Endothelial cell of umbilical vein (primary cell): ENCODE measurements at regions of chr7 and their contacts with region 1.

Region 1: DNA sequence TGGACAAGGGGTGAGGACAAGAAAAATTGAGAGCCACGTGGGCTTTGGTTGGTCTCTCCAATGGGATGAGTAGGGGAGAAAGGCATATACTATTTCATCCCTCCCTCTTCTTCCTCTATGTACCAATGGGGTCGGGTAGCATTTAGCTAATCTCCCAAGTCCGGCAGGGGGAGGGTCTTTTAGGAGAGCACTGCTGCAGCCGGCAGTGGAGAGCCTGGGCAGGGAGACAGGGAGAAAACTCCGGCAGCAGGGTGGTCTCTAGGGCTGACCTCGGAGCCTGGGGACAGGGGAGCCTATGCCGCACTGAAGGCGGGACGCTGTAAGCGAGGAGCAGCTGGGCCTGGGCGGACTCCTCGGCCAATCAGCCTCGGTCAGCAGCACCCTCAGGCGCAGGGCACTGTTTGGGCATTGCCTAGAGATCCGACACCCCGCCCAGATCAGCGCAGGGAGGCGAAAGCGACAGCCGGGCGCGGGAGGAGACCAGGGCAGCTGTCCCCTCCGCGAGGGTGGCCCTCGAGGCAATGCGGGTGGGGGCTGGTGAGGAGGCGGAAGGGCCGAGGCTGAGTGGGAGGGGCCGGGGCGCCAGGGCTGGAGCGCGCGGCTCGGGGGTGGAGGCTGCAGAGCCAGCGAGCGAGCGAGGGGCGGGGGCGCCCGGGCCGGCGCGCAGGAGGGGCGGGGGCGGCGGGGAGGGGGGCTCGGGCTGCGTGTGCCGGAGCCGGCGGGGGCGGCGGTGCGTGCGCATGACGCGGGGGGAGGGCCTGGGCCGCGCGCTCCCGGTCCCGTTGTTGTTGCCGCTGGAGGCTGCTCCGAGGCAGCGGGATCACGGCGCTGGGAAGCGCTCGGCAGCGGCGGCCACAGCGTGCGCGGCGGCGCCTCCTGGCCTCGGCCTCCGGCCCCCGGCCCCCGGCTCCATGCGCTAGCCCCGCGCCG is at the start of gene AGAP3:
- DNase-seq: peak; percentile 80
- H3K4me3 ChIP-seq: peak within 1 kb of the TSS; percentile 81 to 96 (median 82)
- H3K27ac ChIP-seq: peak within 1 kb of the TSS; percentile 98
- H3K4me1 ChIP-seq: peaks cover 59% of the 10 kb centered on the region
- H3K27me3 ChIP-seq: no peaks in the 10 kb centered on the region
- CTCF ChIP-seq: peak in 1 of 2 donors; percentile 1
- POLR2A ChIP-seq: peak; percentile 89
- total RNA-seq, gene AGAP3: 171 and 173 TPM in 2 replicates

Region 2: DNA sequence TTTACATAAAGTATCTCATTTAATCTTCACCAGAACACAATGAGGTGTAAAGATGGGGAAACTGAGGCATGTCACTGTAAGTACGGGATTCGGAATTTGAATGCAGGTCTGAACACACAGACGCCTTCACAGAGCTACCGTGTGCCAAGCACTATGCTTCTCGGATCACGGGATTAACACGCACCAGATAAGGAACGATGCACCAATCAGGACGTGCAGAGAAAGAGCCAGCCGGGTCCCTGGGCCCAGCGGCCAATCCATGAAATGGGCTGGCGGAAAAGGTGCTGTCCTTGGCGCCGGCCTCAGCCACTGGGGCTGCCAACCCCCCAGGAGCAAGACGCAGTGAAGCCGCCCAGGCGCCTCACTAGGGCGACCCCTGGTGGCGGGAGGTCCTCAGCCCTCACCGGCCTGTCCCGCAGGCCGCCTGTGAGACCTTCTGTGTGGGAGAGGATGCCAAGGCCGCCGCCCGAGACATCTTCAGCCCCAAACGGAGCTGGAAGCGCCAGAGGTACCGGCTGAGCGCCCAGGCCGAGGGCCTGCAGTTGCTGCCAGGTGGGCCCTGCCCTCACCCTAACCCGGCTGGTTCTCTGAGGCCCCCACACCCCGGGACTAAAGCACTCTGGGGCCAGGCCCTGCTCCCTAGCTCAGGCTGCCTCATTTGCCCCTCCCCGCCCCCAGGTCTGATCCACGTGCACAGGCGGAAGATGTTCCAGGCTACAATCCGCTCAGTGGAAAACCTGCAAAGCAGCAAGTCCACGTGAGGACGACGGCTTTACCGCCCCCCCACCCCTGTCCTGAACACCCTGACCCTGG is 77.2 kb before region 1 on chr7:
- CTCF ChIA-PET with region 1: no interaction called
- POLR2A ChIA-PET with region 1: no interaction called
- dilution Hi-C with region 1: no loop called
- intact Hi-C with region 1: no loop called
- DNase-seq: peak; percentile 62
- H3K4me3 ChIP-seq: no peak overlapping the region
- H3K27ac ChIP-seq: peak overlapping the region; percentile 23
- H3K4me1 ChIP-seq: peaks cover 44% of the 10 kb centered on the region
- H3K27me3 ChIP-seq: no peaks in the 10 kb centered on the region
- CTCF ChIP-seq: peak; percentile 96 to 98
- POLR2A ChIP-seq: peak; percentile 49

Region 3: GRCh38 chr7:151038951-151039849 is 46.8 kb before region 1 on chr7:
- CTCF ChIA-PET with region 1: no interaction called
- POLR2A ChIA-PET with region 1: no interaction called
- dilution Hi-C with region 1: no loop called
- intact Hi-C with region 1: loop called (anchors 2 kb)
- DNase-seq: peak; percentile 97
- H3K4me3 ChIP-seq: no peak overlapping the region
- H3K27ac ChIP-seq: peak overlapping the region; percentile 85
- H3K4me1 ChIP-seq: peaks cover 20% of the 10 kb centered on the region
- H3K27me3 ChIP-seq: no peaks in the 10 kb centered on the region
- CTCF ChIP-seq: no peak
- POLR2A ChIP-seq: peak; percentile 15

Region 4: GRCh38 chr7:151057989-151058780 is 27.8 kb before region 1 on chr7:
- CTCF ChIA-PET with region 1: interaction called, 6 read pairs
- POLR2A ChIA-PET with region 1: no interaction called
- dilution Hi-C with region 1: no loop called
- intact Hi-C with region 1: loop called (anchors 1 kb)
- DNase-seq: peak; percentile 100
- H3K4me3 ChIP-seq: peak overlapping the region in 2 of 3 experiments; percentile 11 to 69
- H3K27ac ChIP-seq: peak overlapping the region; percentile 81
- H3K4me1 ChIP-seq: peaks cover 29% of the 10 kb centered on the region
- H3K27me3 ChIP-seq: no peaks in the 10 kb centered on the region
- CTCF ChIP-seq: no peak
- POLR2A ChIP-seq: peak; percentile 52

Region 5: GRCh38 chr7:151104411-151105235 is 18.7 kb after region 1 on chr7:
- CTCF ChIA-PET with region 1: interaction called, 29 read pairs
- POLR2A ChIA-PET with region 1: interaction called, 4 read pairs
- dilution Hi-C with region 1: no loop called
- intact Hi-C with region 1: no loop called
- DNase-seq: peak; percentile 85
- H3K4me3 ChIP-seq: no peak overlapping the region
- H3K27ac ChIP-seq: no peak overlapping the region
- H3K4me1 ChIP-seq: peaks cover 17% of the 10 kb centered on the region
- H3K27me3 ChIP-seq: no peaks in the 10 kb centered on the region
- CTCF ChIP-seq: no peak
- POLR2A ChIP-seq: no peak

Region 6: DNA sequence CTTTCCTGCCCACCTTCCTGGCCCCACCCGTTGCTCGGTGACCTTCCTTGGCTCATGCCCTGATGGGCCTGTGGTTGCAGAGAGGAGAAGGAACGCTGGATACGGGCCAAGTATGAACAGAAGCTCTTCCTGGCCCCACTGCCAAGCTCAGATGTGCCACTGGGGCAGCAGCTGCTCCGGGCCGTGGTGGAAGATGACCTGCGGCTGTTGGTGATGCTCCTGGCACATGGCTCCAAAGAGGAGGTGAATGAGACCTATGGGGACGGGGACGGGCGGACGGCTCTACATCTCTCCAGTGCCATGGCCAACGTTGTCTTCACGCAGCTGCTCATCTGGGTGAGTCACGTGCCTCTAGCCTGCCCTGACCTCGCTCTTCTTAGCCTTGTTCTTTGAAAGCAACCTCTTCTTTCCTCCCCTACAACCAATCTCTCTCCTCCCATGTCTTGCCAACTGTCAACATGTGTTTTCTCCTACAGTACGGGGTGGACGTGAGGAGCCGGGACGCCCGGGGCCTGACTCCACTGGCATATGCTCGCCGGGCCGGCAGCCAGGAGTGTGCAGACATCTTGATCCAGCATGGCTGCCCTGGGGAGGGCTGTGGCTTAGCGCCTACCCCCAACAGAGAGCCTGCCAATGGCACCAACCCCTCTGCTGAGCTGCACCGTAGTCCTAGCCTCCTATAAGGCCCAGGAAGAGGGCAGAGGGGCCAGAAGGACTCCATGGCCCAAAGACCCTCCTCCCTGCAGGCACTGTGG is 57.5 kb after region 1 on chr7:
- CTCF ChIA-PET with region 1: no interaction called
- POLR2A ChIA-PET with region 1: interaction called, 12 read pairs
- dilution Hi-C with region 1: no loop called
- intact Hi-C with region 1: no loop called
- DNase-seq: no peak
- H3K4me3 ChIP-seq: no peak overlapping the region
- H3K27ac ChIP-seq: no peak overlapping the region
- H3K4me1 ChIP-seq: no peaks in the 10 kb centered on the region
- H3K27me3 ChIP-seq: no peaks in the 10 kb centered on the region
- CTCF ChIP-seq: no peak
- POLR2A ChIP-seq: no peak